Left ventricle myocardium superior (tissue), 1 donor: ENCODE measurements at regions of chr6 and their contacts with region 1.

Region 1: GRCh38 chr6:83067448-83068413 is at the start of gene DOP1A:
- DNase-seq: peak; percentile 98
- ATAC-seq: peak; percentile 97
- total RNA-seq, gene DOP1A: 17.7 TPM

Region 2: DNA sequence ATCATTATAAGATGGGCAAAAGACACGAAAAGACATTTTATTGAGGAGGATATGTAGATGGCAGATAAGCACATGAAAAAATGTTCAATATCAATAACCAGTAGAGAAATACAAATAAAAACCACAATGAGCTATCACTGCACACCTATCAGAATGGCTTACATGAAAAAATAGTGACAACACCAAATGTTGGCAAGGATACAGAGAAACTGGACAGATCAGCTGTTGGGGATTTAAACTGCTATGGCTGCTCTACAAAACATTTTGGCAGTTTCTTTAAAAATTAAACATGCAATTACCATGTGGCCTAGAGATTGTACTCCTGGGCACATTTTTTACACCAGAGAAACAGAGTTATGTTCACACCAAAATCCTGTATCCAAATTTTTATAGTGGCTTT is 1142.5 kb before region 1 on chr6:
- intact Hi-C with region 1: no loop called
- DNase-seq: no peak
- ATAC-seq: no peak

Region 3: DNA sequence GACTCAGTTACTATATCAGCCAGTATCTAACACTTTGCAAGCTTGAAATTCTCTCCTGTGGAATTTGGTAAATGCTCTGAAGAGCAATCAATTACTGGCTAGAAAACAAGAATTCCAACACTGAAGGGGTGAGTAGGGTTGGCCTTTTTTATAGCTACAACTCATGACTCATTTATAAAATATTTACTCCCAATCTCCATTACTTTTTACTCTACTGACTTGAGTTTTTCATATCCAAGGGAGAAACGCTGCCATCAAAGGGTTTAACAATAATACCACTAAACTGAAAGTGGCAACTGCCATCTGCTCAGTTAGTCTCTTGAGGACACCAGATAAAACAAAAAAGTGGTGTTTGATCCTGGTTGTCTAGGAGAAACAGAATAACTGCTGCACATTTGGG is 205.2 kb before region 1 on chr6:
- intact Hi-C with region 1: no loop called
- DNase-seq: no peak
- ATAC-seq: no peak

Region 4: GRCh38 chr6:83119742-83120300 is 52.1 kb after region 1 on chr6:
- intact Hi-C with region 1: no loop called
- DNase-seq: no peak
- ATAC-seq: no peak

Region 5: DNA sequence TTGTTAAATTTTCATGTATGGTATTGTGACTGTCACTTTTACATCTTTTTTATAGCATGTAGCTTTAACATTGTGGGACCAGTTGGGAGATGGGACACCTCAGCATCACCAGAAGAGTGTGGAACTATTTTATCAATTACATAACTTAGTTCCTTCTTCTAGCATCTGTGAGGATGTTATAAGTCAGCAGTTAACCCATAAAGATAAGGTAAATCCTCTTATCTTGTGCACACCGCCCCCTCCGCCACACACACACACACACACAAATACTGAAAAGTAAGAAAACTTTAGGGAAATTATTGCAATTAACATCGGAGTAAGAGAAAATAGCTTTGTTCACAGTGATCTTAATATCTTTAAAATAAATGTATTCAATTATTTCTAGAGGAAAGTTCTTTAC is 64.4 kb after region 1 on chr6:
- intact Hi-C with region 1: no loop called
- DNase-seq: no peak
- ATAC-seq: no peak

Region 6: DNA sequence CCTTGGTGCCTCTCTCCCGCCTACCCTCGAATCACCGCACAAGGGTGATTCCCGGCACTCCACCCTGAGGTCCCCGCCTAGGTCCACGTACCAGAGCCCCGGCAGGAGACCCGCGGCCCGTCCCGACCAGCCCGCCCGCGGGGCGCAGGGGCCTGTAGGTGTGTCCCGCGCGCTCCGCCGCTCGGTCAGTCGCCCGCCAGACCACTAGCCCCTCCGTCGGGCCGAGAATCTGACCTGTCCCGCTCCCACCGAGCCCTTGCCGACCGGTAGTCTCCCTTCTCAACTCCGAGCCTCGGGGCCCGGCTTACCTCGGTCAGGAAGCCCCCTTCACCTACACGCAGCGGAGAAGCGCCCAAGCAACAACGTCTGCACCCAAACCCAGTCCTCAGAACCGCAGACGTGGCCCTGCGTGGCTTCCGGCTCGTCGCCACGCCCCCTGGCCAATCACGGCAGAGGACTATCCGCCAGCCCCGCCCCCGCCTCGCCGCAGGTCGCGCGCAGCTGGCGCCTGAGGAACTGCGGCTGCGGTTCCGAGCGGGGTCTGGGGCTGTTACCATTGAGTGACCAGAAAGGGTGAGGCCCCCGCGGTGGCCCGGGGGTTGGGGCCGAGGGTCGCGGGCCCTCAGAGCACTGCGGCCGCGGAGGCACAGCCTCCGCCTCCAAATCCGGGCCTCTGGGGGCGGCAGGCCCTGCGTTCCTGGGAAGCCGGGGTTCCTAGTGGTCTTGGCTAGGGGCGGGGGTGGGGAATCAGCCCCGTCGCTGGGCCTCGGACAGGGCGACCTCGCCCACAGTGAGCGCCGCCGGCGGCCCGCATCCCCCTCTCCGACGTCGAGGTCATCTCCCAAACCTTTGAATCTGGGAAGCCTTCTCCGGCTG is 125.4 kb after region 1 on chr6 and contains the starts of genes PGM3 and RWDD2A:
- intact Hi-C with region 1: loop called (anchors 10 kb)
- DNase-seq: peak; percentile 95
- ATAC-seq: peak; percentile 100
- total RNA-seq, gene PGM3: 13.2 TPM
- total RNA-seq, gene RWDD2A: 2.8 TPM

Region 7: GRCh38 chr6:83215131-83216047 is 147.7 kb after region 1 on chr6:
- intact Hi-C with region 1: loop called (anchors 10 kb)
- DNase-seq: peak; percentile 41
- ATAC-seq: peak; percentile 95